ENCODE measurements at regions of chr15 and their contacts with region 1.

Region 1: DNA sequence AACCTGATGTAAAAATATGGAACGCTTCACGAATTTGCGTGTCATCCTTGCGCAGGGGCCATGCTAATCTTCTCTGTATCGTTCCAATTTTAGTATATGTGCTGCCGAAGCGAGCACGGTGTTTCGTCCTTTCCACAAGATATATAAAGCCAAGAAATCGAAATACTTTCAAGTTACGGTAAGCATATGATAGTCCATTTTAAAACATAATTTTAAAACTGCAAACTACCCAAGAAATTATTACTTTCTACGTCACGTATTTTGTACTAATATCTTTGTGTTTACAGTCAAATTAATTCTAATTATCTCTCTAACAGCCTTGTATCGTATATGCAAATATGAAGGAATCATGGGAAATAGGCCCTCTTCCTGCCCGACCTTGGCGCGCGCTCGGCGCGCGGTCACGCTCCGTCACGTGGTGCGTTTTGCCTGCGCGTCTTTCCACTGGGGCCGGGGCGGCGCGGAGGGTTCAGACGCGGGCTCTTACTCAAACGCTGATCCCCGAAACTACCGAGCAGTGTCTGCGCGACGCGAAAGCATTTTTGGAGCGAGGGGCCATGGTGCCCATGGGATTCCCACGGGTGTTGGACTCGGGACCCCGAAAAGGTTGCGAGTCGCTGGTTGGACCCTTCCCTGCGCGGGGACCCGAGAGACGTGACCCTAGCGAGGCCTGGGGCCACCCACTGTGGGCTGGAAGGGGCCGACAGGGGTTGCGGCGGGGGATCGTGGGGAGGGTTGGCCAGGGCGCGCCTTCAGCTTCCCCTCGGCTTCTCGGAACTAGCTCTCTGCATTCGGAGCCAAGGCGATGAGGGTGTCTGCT is at the start of gene RNU6-1:
- DNase-seq: peak; percentile 97 to 98 (median 98)
- H3K4me3 ChIP-seq: peak within 1 kb of the TSS; percentile 91 to 96
- H3K4me3 Mint-ChIP-seq: peak within 1 kb of the TSS; percentile 94 to 98 (median 96)
- H3K27ac ChIP-seq: peak within 1 kb of the TSS; percentile 90
- H3K27ac Mint-ChIP-seq: peak within 1 kb of the TSS; percentile 95 to 99 (median 97)
- H3K4me1 ChIP-seq: peaks cover 37% of the 10 kb centered on the region
- H3K4me1 Mint-ChIP-seq: peaks cover 11 to 54% (median 29%) of the 10 kb centered on the region in 4 donors
- H3K27me3 ChIP-seq: peaks cover 11% of the 10 kb centered on the region
- H3K27me3 Mint-ChIP-seq: peaks cover 6 to 11% of the 10 kb centered on the region in 2 donors
- total RNA-seq, gene RNU6-1: not detected

Region 2: GRCh38 chr15:66700802-66701421 is 1139.2 kb before region 1 on chr15:
- CTCF ChIA-PET with region 1: no interaction called
- POLR2A ChIA-PET with region 1: no interaction called
- intact Hi-C with region 1: loop called (anchors 10 kb)
- DNase-seq: peak; percentile 76 to 82 (median 79)
- H3K4me3 ChIP-seq: peak overlapping the region; percentile 53 to 86
- H3K4me3 Mint-ChIP-seq: peak overlapping the region; percentile 86 to 92 (median 89)
- H3K27ac ChIP-seq: no peak overlapping the region
- H3K27ac Mint-ChIP-seq: peak overlapping the region in 5 of 7 donors; percentile 66 to 90 (median 81)
- H3K4me1 ChIP-seq: peaks cover 19% of the 10 kb centered on the region
- H3K4me1 Mint-ChIP-seq: peaks cover 11 to 32% (median 19%) of the 10 kb centered on the region in 4 donors
- H3K27me3 ChIP-seq: peaks cover 15% of the 10 kb centered on the region
- H3K27me3 Mint-ChIP-seq: peaks cover 8 to 22% of the 10 kb centered on the region in 2 donors

Region 3: DNA sequence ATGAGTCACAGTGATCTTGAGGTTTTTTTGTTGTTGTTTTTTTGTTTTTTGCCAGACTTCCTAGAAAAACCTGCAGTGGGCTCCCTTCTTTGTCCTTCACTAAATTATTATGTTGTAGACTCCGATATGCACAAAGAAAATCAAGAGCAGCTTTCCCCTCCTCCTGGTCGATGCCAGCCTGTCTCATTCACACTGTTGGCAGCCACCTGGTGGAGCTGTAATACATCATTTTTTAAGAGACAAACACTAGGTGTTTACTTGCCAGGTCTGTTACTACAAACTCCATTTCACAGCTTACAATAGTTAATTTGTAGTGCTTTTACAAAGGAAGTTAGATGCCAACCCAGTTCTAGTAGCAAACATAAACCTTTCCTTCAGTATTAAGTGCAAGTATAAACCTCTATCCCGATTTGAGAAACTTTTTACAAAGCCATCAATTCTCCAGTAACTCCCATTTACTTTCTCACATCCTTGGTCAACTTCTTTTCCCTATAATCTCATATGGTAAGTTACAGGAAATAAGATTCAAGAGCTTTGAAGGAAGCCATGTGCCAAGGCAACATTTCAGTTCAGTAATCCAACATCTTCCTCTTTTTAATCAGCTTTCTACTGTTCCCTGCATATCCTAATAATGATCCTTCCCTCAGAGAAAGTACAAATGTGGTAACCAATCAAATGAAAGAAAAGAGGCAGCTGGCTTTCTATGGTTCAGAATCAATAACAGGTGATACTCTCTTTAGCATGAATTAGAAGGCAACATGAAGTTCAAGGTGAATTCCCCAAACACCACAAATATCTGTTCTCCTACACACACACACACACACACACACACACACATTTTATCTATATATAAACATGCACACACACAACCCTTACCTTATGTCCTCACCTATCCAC is 599.7 kb before region 1 on chr15:
- CTCF ChIA-PET with region 1: interaction called, 5 read pairs
- POLR2A ChIA-PET with region 1: interaction called, 4 read pairs
- intact Hi-C with region 1: loop called (anchors 2 kb)
- DNase-seq: peak; percentile 27 to 46 (median 40)
- H3K4me3 ChIP-seq: peak overlapping the region in 1 of 2 donors; percentile 46
- H3K4me3 Mint-ChIP-seq: peak overlapping the region; percentile 43 to 88 (median 62)
- H3K27ac ChIP-seq: peak overlapping the region; percentile 53
- H3K27ac Mint-ChIP-seq: peak overlapping the region; percentile 78 to 93 (median 87)
- H3K4me1 ChIP-seq: peaks cover 45% of the 10 kb centered on the region
- H3K4me1 Mint-ChIP-seq: peaks cover 44 to 61% (median 44%) of the 10 kb centered on the region in 4 donors
- H3K27me3 ChIP-seq: no peaks in the 10 kb centered on the region
- H3K27me3 Mint-ChIP-seq: no peaks in the 10 kb centered on the region

Region 4: DNA sequence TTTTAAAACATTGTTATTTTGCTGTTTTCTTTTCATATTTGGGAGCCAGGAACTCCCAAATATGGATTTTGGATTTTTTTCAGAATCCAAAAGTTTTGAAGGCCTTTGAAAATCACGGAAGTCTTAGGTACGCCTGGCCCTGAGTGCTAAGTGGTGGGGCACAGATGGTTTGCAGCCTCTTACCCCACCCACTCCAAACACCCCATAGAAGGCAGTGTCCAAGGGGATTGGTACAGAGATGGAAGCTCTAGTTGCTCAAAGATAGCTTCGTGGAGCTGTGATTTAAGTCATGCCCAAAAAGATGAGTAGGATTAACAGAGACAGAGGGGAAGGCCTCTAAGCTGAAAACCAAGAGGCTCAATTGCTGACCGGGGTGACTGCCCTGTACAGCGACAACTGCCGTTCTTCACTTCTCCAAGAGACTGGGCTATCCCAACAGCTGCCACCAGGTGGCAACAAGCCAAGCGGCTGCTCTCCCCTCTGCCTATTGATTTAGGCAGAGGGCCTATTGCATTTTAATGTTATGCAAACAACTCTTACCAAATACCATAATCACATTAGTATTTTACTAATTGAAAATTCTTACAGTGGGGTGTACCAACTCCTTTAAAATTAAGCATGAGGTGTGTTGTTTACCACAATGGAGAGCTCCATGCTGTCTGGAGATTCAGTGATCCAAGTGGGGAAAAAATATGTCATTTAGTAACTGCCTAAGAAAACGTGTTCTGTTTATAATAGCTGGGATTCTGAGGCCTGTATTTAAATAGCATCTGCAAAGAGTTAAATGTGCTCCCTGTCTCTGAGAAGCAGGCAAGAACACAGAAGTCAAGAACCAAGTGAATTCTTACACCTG is 383.2 kb before region 1 on chr15:
- CTCF ChIA-PET with region 1: interaction called, 110 read pairs
- POLR2A ChIA-PET with region 1: interaction called, 10 read pairs
- intact Hi-C with region 1: loop called (anchors 1 kb)
- DNase-seq: peak; percentile 69 to 75 (median 72)
- H3K4me3 ChIP-seq: no peak overlapping the region
- H3K4me3 Mint-ChIP-seq: peak overlapping the region in 2 of 8 donors; percentile 20 to 26
- H3K27ac ChIP-seq: no peak overlapping the region
- H3K27ac Mint-ChIP-seq: no peak overlapping the region
- H3K4me1 ChIP-seq: no peaks in the 10 kb centered on the region
- H3K4me1 Mint-ChIP-seq: peaks cover 0 to 1% (median 0%) of the 10 kb centered on the region in 4 donors
- H3K27me3 ChIP-seq: no peaks in the 10 kb centered on the region
- H3K27me3 Mint-ChIP-seq: peaks cover 0 to 2% of the 10 kb centered on the region in 2 donors

Region 5: DNA sequence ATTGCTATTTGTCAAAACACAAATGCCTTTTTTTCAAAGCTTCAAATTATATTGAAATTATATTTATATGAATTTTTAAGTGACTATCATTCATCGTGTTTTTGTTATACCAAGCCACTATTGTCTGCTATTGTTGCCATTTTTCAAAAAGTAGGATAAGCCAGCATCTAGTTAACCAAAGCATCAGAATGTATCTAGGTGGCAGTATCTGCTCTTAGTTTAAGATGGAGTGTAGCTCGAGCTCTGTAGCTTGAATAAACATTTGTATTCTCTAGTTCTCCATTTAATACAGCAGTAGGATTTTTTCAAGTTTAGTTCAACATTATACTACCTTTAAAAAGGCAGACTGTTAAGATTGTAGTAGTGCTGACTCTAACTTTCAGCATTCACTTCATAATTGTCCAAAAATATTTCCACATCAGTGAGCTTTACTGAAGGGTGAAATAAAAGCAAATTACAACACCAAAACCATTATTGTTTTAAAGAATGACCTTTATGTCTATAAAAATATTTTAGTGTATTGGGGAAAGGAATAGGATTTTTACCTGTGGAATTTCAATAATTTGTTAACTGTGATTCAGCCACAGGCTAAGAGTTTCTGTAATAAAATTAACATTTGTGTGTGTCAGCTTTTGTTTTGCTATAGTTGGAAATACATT is 338.8 kb before region 1 on chr15:
- CTCF ChIA-PET with region 1: interaction called, 21 read pairs
- POLR2A ChIA-PET with region 1: no interaction called
- intact Hi-C with region 1: loop called (anchors 2 kb)
- DNase-seq: peak in 3 of 5 donors; percentile 6 to 10 (median 7)
- H3K4me3 ChIP-seq: no peak overlapping the region
- H3K4me3 Mint-ChIP-seq: no peak overlapping the region
- H3K27ac ChIP-seq: no peak overlapping the region
- H3K27ac Mint-ChIP-seq: no peak overlapping the region
- H3K4me1 ChIP-seq: no peaks in the 10 kb centered on the region
- H3K4me1 Mint-ChIP-seq: peaks cover 0 to 1% (median 0%) of the 10 kb centered on the region in 4 donors
- H3K27me3 ChIP-seq: no peaks in the 10 kb centered on the region
- H3K27me3 Mint-ChIP-seq: no peaks in the 10 kb centered on the region

Region 6: DNA sequence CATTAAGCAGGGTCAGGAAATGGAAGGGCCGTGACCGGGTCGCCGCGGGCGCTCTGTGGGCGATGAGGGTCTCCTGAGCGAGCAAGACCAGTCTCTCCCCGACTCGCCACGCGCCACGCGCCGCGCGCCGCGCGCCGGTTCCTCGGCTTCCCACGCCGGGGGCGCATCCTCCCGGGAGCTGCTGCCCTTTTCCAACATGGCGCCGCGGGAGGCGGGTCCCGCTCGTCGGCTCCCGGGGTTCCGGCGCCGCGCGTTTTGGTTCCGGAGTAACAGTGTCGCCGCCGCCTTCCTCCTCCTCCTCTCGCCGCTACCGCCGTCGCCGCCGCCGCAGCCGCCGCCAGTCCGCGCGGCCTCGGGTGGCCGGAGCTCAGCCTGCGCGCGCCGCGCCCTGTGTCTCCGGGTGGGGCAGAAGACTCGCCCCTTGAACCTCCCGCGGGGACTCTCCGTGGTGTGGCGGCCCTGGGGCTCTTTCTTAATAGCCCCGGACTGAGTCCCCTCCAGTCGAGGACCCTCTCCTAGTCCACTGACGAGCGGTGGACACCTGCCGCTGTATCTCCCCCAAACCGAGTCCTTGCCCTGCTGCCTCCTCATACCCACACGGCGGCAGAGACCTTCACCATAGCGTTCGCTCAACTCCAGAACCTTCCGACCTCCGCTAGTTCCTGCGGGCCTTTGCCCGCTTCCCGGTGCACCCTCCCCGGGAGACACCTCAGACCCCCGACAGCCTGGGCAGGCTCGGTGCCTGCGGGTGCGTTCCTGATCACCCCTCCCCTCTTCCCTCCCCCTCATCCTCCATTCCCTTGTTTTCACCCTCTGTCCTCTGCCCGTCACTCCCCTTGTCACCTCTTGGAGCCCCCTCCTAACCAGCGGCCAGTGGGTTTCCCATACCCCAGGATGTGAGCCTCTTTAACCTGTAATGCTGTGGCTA is 297.5 kb before region 1 on chr15 and contains the start of gene MAP2K5:
- CTCF ChIA-PET with region 1: no interaction called
- POLR2A ChIA-PET with region 1: interaction called, 29 read pairs
- intact Hi-C with region 1: loop called (anchors 1 kb)
- DNase-seq: peak; percentile 75 to 84 (median 79)
- H3K4me3 ChIP-seq: peak within 1 kb of the TSS; percentile 67 to 81
- H3K4me3 Mint-ChIP-seq: peak within 1 kb of the TSS; percentile 94 to 98 (median 96)
- H3K27ac ChIP-seq: peak within 1 kb of the TSS; percentile 77
- H3K27ac Mint-ChIP-seq: peak within 1 kb of the TSS; percentile 90 to 100 (median 99)
- H3K4me1 ChIP-seq: peaks cover 49% of the 10 kb centered on the region
- H3K4me1 Mint-ChIP-seq: peaks cover 38 to 65% (median 51%) of the 10 kb centered on the region in 4 donors
- H3K27me3 ChIP-seq: no peaks in the 10 kb centered on the region
- H3K27me3 Mint-ChIP-seq: no peaks in the 10 kb centered on the region
- total RNA-seq, gene MAP2K5: 27.8 to 31.4 TPM

Region 7: DNA sequence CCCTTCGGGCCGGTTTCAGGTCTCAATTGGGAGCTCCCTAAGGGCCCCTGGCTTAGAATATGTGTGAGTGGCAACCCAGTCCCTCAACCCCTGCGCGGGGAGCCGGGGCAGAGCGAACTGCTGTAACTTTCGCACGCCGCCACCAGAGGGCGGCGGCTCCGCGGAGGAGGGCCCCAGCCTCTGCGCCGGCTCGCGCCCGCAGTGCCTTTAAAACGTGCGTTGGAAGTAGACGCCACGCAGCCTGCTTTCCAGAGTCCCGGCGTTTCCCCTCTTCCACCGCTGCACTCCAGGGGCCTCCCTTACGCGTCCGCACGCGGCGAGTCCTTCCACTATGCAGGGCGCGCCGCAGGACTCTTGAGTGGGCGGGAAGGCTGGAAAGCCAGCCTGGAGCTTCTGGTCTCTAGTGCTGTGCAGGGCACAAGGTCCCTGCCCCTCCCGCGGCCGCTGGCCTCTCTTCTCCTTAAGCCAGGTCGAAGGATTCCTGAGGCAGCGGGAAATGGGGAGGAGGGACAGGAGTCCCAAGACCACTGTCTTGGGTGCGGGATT is 23.4 kb after region 1 on chr15:
- CTCF ChIA-PET with region 1: interaction called, 5 read pairs
- POLR2A ChIA-PET with region 1: interaction called, 3 read pairs
- intact Hi-C with region 1: loop called (anchors 2 kb)
- DNase-seq: peak; percentile 57 to 65 (median 63)
- H3K4me3 ChIP-seq: peak overlapping the region in 1 of 2 donors; percentile 27
- H3K4me3 Mint-ChIP-seq: peak overlapping the region in 6 of 8 donors; percentile 25 to 64 (median 56)
- H3K27ac ChIP-seq: no peak overlapping the region
- H3K27ac Mint-ChIP-seq: no peak overlapping the region
- H3K4me1 ChIP-seq: peaks cover 10% of the 10 kb centered on the region
- H3K4me1 Mint-ChIP-seq: no peaks in the 10 kb centered on the region
- H3K27me3 ChIP-seq: no peaks in the 10 kb centered on the region
- H3K27me3 Mint-ChIP-seq: peaks cover 6 to 12% of the 10 kb centered on the region in 2 donors

Region 8: DNA sequence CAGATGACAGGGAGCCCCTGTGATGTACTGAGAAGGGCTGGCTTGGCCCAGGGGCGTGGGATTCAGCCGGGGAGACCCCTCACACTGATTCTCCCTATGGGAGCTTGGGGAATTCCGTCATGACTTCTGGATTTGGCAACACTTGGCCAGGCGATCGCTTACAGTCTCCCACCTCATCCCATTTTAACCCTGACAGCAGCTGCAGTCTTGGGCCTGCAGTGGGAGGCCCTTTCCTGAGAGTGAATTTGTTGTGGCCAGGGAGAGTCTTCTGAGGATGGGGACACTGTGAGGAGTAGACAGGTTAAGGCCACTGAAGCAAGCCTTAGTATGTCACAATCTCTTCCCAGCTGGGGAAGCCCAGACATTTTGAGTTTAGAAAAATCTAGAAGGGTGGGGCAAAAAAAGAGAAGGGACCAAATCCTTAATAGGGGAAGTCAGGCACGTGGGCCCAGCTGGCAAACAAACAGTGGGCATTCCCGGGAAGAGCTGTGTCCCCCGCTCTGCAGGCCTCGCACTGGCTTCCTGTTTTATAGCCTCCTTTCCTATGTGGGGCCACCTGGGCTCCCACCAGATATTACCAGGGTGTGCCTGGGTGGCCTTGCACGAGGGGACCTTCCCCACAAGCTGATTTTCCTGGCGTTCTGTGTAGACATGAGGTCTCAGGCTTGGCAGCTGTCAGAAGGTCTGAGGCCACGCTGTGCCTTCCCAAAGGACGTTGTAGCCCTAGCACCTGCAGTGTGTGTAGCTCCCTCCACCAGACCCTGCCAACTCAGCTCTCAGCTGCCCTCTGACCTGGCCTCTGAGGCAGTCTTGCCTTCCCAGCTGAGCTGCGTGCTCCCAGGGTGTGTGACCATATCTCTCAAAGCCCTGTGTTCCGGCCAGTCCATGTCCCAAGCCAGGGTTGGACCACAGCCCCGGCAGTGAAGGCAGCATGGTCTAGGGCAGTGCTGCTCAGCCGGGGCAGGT is 501.9 kb after region 1 on chr15:
- CTCF ChIA-PET with region 1: no interaction called
- POLR2A ChIA-PET with region 1: no interaction called
- intact Hi-C with region 1: no loop called
- DNase-seq: no peak
- H3K4me3 ChIP-seq: no peak overlapping the region
- H3K4me3 Mint-ChIP-seq: no peak overlapping the region
- H3K27ac ChIP-seq: no peak overlapping the region
- H3K27ac Mint-ChIP-seq: no peak overlapping the region
- H3K4me1 ChIP-seq: no peaks in the 10 kb centered on the region
- H3K4me1 Mint-ChIP-seq: no peaks in the 10 kb centered on the region
- H3K27me3 ChIP-seq: no peaks in the 10 kb centered on the region
- H3K27me3 Mint-ChIP-seq: peaks cover 1 to 4% of the 10 kb centered on the region in 2 donors